MCF 10A (cell line): ENCODE measurements at regions of chr20 and their contacts with region 1.

Region 1: GRCh38 chr20:53899351-53900167 is 170.8 kb downstream of the BCAS1 start:
- DNase-seq: peak; percentile 89
- H3K4me3 Mint-ChIP-seq: peak overlapping the region; percentile 39
- H3K27ac Mint-ChIP-seq: peak overlapping the region; percentile 75
- H3K4me1 Mint-ChIP-seq: peaks cover 27% of the 10 kb centered on the region
- H3K27me3 Mint-ChIP-seq: no peaks in the 10 kb centered on the region
- CTCF ChIP-seq: no peak

Region 2: GRCh38 chr20:53738039-53738944 is 161.3 kb before region 1 on chr20:
- CTCF ChIA-PET with region 1: interaction called, 4 read pairs
- POLR2A ChIA-PET with region 1: interaction called, 10 read pairs
- intact Hi-C with region 1: no loop called
- DNase-seq: no peak
- H3K4me3 Mint-ChIP-seq: no peak overlapping the region
- H3K27ac Mint-ChIP-seq: no peak overlapping the region
- H3K4me1 Mint-ChIP-seq: peaks cover 32% of the 10 kb centered on the region
- H3K27me3 Mint-ChIP-seq: no peaks in the 10 kb centered on the region
- CTCF ChIP-seq: no peak

Region 3: GRCh38 chr20:53926428-53927028 is 27.0 kb after region 1 on chr20:
- CTCF ChIA-PET with region 1: no interaction called
- POLR2A ChIA-PET with region 1: interaction called, 6 read pairs
- intact Hi-C with region 1: loop called (anchors 1 kb)
- DNase-seq: peak; percentile 97
- H3K4me3 Mint-ChIP-seq: peak overlapping the region; percentile 8
- H3K27ac Mint-ChIP-seq: peak overlapping the region; percentile 92
- H3K4me1 Mint-ChIP-seq: peaks cover 24% of the 10 kb centered on the region
- H3K27me3 Mint-ChIP-seq: no peaks in the 10 kb centered on the region
- CTCF ChIP-seq: no peak